ENCODE measurements at regions of chr6 and their contacts with region 1.

Region 1: DNA sequence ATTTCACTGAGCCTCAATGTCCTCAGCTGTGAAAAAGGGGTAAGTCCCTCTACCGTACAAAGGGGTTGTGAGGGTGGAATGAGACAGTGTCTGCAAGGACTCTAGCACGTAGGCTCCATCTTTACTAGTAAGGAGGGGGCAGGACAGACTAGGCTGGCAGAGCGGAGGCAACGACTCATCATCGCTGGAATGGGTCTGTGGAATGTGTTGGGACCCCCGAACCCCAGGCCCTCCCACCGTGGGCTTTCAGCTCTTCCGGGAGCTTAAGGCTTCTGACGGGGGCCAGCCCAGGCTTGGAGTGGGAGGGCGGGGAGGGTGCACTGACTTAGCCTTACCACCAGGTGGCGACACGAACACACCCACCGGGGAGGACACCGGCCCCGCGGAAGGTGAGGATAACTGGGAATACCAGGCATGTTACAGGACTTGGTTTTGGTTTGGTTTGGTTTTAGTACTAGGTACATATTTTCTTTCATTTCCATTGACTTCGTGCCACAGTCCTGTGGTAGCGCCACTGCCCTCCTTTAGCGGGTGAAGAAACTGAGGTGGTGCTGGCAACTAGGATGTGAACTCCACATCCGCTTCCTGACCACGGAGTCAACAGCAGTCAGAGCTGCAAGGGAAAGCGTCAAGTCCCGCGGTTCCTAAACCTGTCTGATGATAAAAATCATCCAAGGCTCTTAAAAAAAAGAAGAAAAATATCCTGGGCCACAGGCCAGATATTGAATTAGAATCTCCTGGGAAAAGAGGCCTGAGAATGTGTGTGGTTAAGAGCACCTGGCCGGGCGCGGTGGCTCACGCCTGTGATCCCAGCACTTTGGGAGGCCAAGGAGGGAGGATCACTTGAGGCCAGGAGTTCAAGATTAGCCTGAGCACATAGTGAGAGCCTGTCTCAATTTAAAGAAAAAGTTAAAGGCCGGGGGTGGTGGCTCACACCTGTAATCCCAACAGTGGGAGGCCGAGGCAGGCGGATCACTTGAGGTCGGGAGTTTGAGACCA is 10.3 kb upstream of the TULP1 start:
- DNase-seq: peak; percentile 45 to 69
- H3K4me3 ChIP-seq: no peak overlapping the region
- H3K27ac ChIP-seq: no peak overlapping the region
- H3K4me1 ChIP-seq: 0 out of 2 replicates have a peak, but pooled peaks cover 12% of the 10 kb centered on the region
- H3K27me3 ChIP-seq: no peaks in the 10 kb centered on the region
- CTCF ChIP-seq: peak; percentile 96

Region 2: DNA sequence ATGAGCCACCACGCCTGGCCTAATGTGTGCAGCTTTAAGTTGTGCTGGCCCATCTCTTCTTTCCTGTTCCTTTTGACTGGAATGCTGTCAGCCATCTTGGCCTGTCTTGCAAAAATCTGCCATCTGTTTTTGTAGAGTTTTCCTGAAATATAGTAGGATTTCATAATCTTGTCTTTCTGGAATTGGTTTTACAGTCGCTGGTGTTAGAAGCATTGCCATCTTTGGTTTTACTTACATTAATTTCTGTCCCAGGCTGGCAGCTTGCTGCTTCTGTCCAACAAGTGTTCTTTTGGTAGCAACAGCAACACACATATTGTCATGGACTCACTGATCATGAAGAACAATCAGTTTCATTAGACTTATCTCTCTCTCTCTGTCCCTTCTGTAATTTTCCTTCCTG is 18.9 kb after region 1 on chr6:
- CTCF ChIA-PET with region 1: interaction called, 19 read pairs
- POLR2A ChIA-PET with region 1: interaction called, 4 read pairs
- intact Hi-C with region 1: no loop called
- DNase-seq: no peak
- H3K4me3 ChIP-seq: no peak overlapping the region
- H3K27ac ChIP-seq: no peak overlapping the region
- H3K4me1 ChIP-seq: 0 out of 2 replicates have a peak, but pooled peaks cover 4% of the 10 kb centered on the region
- H3K27me3 ChIP-seq: no peaks in the 10 kb centered on the region
- CTCF ChIP-seq: no peak

Region 3: GRCh38 chr6:35737413-35738211 is 214.7 kb after region 1 on chr6:
- CTCF ChIA-PET with region 1: interaction called, 18 read pairs
- POLR2A ChIA-PET with region 1: no interaction called
- intact Hi-C with region 1: loop called (anchors 1 kb)
- DNase-seq: peak in 1 of 2 experiments; percentile 72
- H3K4me3 ChIP-seq: no peak overlapping the region
- H3K27ac ChIP-seq: no peak overlapping the region
- H3K4me1 ChIP-seq: peaks cover 1% of the 10 kb centered on the region
- H3K27me3 ChIP-seq: no peaks in the 10 kb centered on the region
- CTCF ChIP-seq: peak; percentile 75

Measured in PC-9 (cell line).